ENCODE measurements at regions of chr7 and their contacts with region 1.

Region 1: DNA sequence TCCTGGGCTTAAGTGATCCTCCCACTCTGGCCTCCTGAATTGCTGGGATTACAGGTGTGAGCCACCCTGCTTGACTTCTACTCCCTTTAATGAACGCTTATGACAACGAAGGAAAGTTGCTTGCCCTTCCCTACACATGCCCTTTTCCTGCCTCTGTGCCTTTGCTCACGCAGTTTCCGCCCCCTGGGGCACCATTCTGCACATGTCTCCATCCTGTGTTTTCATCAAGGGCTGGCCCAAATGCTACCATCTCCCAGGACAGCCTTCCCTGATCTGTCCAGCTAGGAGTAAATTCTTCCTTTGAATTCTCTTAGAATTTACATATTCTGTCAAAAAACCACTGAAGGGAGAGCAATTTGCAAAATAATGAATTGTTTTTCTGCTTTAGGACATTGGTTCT is 50.0 kb upstream of the KMT2C start:
- DNase-seq: no peak
- H3K4me3 ChIP-seq: no peak overlapping the region
- H3K27ac ChIP-seq: no peak overlapping the region
- H3K4me1 ChIP-seq: no peaks in the 10 kb centered on the region
- H3K27me3 ChIP-seq: no peaks in the 10 kb centered on the region
- CTCF ChIP-seq: no peak

Region 2: DNA sequence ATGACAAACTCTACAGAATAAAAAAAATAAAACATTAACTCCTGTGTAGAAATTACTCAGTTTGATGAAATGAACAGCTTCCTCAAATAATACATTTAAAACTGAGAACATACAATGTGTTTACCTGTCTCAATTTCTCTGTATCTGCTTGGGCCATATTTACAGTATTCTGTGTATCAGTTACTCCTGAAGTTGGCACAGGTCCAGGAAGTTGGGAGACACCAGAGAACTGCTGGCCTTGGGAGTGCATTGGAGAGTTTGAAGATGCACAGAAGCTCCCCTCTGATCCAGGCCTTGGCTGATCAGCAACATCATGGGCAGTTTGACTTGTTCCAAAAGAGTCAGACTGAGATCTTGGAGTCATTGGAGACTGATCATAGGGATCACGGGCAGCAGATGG is 305.2 kb before region 1 on chr7:
- CTCF ChIA-PET with region 1: no interaction called
- POLR2A ChIA-PET with region 1: no interaction called
- intact Hi-C with region 1: no loop called
- DNase-seq: peak; percentile 13
- H3K4me3 ChIP-seq: no peak overlapping the region
- H3K27ac ChIP-seq: no peak overlapping the region
- H3K4me1 ChIP-seq: no peaks in the 10 kb centered on the region
- H3K27me3 ChIP-seq: no peaks in the 10 kb centered on the region
- CTCF ChIP-seq: no peak

Region 3: DNA sequence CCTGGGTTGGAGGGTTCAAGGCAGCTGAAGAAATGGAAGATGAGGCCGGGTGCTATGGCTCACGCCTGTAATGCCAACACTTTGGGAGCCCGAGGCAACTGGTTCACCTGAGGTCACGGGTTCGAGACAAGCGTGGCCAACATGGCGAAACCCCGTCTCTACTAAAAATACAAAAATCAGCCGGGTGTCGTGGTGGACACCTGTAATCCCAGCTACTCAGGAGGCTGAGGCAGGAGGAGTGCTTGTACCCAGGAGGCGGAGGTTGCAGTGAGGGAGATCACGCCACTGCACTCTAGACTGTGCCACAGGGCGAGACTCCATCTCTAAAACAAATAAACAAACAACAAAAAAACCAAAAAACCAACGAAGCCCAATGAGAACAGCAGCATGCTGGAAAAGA is 10.6 kb before region 1 on chr7:
- CTCF ChIA-PET with region 1: no interaction called
- POLR2A ChIA-PET with region 1: interaction called, 10 read pairs
- intact Hi-C with region 1: no loop called
- DNase-seq: no peak
- H3K4me3 ChIP-seq: no peak overlapping the region
- H3K27ac ChIP-seq: no peak overlapping the region
- H3K4me1 ChIP-seq: no peaks in the 10 kb centered on the region
- H3K27me3 ChIP-seq: no peaks in the 10 kb centered on the region
- CTCF ChIP-seq: no peak

Measured in A673 (cell line).